HCT116 (cell line): ENCODE measurements at regions of chrX and their contacts with region 1.

Region 1: DNA sequence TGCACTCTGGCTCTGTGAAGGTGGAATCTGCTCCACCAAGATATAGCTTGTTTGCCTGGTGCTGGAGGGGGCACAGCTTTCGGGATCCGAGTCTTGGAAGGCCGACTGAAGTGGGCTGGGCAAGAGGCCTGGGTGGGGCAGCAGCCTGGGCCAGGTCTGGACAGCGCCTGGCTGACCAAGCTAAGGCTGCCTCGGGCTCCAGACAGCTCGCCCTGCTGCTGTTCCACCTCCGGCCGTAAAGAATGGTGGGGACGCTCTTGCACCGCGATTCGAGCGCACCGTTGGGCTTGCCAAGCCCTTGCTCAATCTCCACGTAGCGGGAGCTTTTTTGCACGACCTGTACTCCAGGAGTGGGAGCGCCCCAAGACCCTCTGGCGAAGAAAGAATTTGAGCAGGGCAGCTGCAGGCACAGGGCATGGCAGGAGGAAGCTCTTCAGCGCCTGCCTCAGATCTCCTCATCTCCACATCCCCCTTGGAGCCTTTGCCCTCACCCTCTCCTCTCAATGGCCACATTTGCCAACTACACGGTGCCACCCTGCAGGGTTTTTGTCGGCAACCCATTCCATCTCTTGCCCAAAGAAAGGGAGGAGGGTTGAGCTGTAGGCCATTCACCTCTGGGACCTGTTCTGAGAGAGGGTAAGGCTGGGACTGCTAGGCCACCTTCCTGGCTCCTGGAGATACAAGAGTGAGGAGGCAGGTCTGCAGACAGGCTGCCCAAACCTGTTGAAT is 18.9 kb downstream of the CNGA2 start:
- DNase-seq: peak; percentile 13
- ATAC-seq: peak; percentile 93
- H3K4me3 ChIP-seq: no peak overlapping the region
- H3K27ac ChIP-seq: no peak overlapping the region
- H3K4me1 ChIP-seq: peaks cover 4 to 7% of the 10 kb centered on the region in 2 experiments; a peak in 2 of 4 replicates
- H3K27me3 ChIP-seq: peaks cover under 1% of the 10 kb centered on the region; the same call in 1 of the 2 replicates
- CTCF ChIP-seq: peak; percentile 50 to 79 (median 67); a peak in 5 of 6 replicates
- POLR2A ChIP-seq: no peak
- RAD21 ChIP-seq: peak; percentile 85

Region 2: GRCh38 chrX:151538190-151539122 is 215.0 kb before region 1 on chrX:
- CTCF ChIA-PET with region 1: no interaction called
- POLR2A ChIA-PET with region 1: no interaction called
- RAD21 ChIA-PET with region 1: no interaction called
- intact Hi-C with region 1: no loop called
- DNase-seq: no peak
- ATAC-seq: no peak
- H3K4me3 ChIP-seq: no peak overlapping the region
- H3K27ac ChIP-seq: no peak overlapping the region
- H3K4me1 ChIP-seq: peaks cover 0 to under 1% of the 10 kb centered on the region in 2 experiments; a peak in 1 of 4 replicates
- H3K27me3 ChIP-seq: no peaks in the 10 kb centered on the region
- CTCF ChIP-seq: no peak
- POLR2A ChIP-seq: no peak
- RAD21 ChIP-seq: no peak

Region 3: DNA sequence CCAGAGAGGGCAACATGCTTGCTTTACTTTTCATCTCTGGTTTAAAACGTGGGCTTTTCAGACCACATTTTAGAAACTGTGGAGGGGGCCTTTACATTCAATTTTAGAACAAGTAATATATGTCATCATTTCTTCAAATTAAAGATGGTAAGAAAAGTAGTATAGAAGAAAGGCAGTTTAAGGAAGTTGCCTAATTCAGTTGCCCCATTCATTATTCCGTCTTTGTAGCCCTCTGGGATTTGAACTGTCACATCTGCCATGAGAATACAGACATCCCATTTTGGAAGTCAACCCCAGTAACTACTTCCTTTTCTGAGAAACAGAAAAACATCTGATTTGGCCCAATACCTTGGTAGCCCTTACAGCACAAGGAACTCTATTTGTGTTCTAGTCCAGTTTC is 128.8 kb before region 1 on chrX:
- CTCF ChIA-PET with region 1: no interaction called
- POLR2A ChIA-PET with region 1: no interaction called
- RAD21 ChIA-PET with region 1: no interaction called
- intact Hi-C with region 1: no loop called
- DNase-seq: no peak
- ATAC-seq: no peak
- H3K4me3 ChIP-seq: no peak overlapping the region
- H3K27ac ChIP-seq: no peak overlapping the region
- H3K4me1 ChIP-seq: no peaks in the 10 kb centered on the region
- H3K27me3 ChIP-seq: peaks cover 11% of the 10 kb centered on the region
- CTCF ChIP-seq: no peak
- POLR2A ChIP-seq: no peak
- RAD21 ChIP-seq: no peak

Region 4: GRCh38 chrX:151974336-151975227 is 221.1 kb after region 1 on chrX and contains the start of gene GABRE:
- CTCF ChIA-PET with region 1: no interaction called
- POLR2A ChIA-PET with region 1: no interaction called
- RAD21 ChIA-PET with region 1: no interaction called
- intact Hi-C with region 1: no loop called
- DNase-seq: no peak
- ATAC-seq: peak; percentile 85
- H3K4me3 ChIP-seq: peak within 1 kb of the TSS; percentile 38 to 57
- H3K27ac ChIP-seq: no peak within 1 kb of the TSS
- H3K4me1 ChIP-seq: peaks cover 15 to 29% of the 10 kb centered on the region in 2 experiments; a peak in 3 of 4 replicates
- H3K27me3 ChIP-seq: no peaks in the 10 kb centered on the region; the same call in 1 of the 2 replicates
- CTCF ChIP-seq: no peak
- POLR2A ChIP-seq: no peak
- RAD21 ChIP-seq: no peak
- total RNA-seq, gene GABRE: 3.9 TPM

Region 5: DNA sequence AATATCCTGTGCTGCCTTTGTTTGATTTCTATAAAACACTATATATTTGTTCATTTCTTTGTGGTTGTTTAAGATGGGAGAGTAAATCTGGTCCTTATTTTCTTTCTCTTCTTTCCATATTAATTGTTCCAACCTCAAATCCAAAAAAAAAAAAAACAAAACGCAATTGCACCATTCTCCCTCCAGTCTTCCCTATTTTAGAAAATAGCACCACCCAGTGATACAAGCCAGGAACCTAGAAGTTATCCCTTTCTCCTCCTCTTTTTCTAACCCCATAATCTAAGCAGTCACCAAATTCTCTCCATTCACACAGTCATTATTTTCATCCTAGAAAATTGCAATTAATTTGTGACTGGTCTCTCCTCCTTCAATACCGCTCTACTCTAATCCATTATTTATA is 589.8 kb after region 1 on chrX:
- CTCF ChIA-PET with region 1: interaction called, 3 read pairs
- POLR2A ChIA-PET with region 1: no interaction called
- RAD21 ChIA-PET with region 1: no interaction called
- intact Hi-C with region 1: loop called (anchors 5 kb)
- DNase-seq: no peak
- ATAC-seq: no peak
- H3K4me3 ChIP-seq: no peak overlapping the region
- H3K27ac ChIP-seq: no peak overlapping the region
- H3K4me1 ChIP-seq: no peaks in the 10 kb centered on the region
- H3K27me3 ChIP-seq: no peaks in the 10 kb centered on the region
- CTCF ChIP-seq: 0 out of 6 replicates have a peak, but pooled peaks of 1 of the 3 experiments have one; percentile 6
- POLR2A ChIP-seq: no peak
- RAD21 ChIP-seq: peak; percentile 30; the same call in 1 of the 2 replicates

Region 6: GRCh38 chrX:152632445-152633097 is 879.1 kb after region 1 on chrX:
- CTCF ChIA-PET with region 1: interaction called, 32 read pairs
- POLR2A ChIA-PET with region 1: no interaction called
- RAD21 ChIA-PET with region 1: interaction called, 10 to 11 read pairs
- intact Hi-C with region 1: loop called (anchors 1 kb)
- DNase-seq: peak; percentile 16
- ATAC-seq: 0 out of 2 replicates have a peak, but pooled peaks have one; percentile 47
- H3K4me3 ChIP-seq: no peak overlapping the region
- H3K27ac ChIP-seq: no peak overlapping the region
- H3K4me1 ChIP-seq: peaks cover 0 to 12% of the 10 kb centered on the region in 2 experiments; a peak in 2 of 4 replicates
- H3K27me3 ChIP-seq: peaks cover 17% of the 10 kb centered on the region; the same call in 1 of the 2 replicates
- CTCF ChIP-seq: peak; percentile 56 to 68 (median 65); a peak in 5 of 6 replicates
- POLR2A ChIP-seq: no peak
- RAD21 ChIP-seq: peak; percentile 71

Region 7: DNA sequence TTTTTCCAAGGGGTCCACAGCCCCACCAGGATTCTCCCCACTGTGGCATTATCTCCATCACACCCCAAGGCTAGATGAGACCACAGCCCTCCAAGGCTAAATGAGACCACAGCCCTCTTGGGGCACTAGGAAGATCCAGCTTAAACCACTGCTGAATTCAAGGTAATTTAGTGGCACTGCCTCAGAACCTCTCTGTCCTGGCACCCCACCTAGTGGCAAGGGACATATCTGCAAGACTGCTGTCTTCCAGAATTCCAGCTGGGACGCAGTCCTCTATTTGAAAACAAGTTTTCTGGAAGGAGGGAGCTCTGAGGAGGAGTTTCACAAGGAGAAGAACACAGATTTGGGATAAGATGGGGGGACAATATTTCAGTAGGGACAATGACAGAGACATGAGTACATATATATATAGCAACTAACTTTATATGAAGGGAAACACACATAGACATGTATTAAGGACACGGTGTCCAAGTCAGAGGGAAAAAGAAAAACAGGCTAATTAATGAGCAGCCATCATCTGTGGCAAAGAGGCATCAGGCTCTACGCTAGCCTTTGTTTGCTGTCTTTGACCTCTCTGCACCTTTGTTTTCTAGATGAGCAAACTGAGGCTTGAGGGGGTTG is 1067.8 kb after region 1 on chrX:
- CTCF ChIA-PET with region 1: interaction called, 6 read pairs
- POLR2A ChIA-PET with region 1: no interaction called
- RAD21 ChIA-PET with region 1: no interaction called
- intact Hi-C with region 1: loop called (anchors 2 kb)
- DNase-seq: peak; percentile 18
- ATAC-seq: peak; percentile 83
- H3K4me3 ChIP-seq: no peak overlapping the region
- H3K27ac ChIP-seq: no peak overlapping the region
- H3K4me1 ChIP-seq: no peaks in the 10 kb centered on the region
- H3K27me3 ChIP-seq: no peaks in the 10 kb centered on the region
- CTCF ChIP-seq: peak; percentile 45 to 74 (median 68); a peak in 5 of 6 replicates
- POLR2A ChIP-seq: no peak
- RAD21 ChIP-seq: peak; percentile 69